ENCODE measurements at regions of chr1 and their contacts with region 1.

Region 1: GRCh38 chr1:26102526-26102925 is 9.1 kb upstream of the PDIK1L start:
- DNase-seq: no peak
- H3K4me3 Mint-ChIP-seq: no peak overlapping the region
- H3K27ac Mint-ChIP-seq: no peak overlapping the region
- H3K4me1 Mint-ChIP-seq: peaks cover 11% of the 10 kb centered on the region
- H3K27me3 Mint-ChIP-seq: peaks cover 20% of the 10 kb centered on the region

Region 2: GRCh38 chr1:26145041-26145959 is 42.8 kb after region 1 on chr1:
- intact Hi-C with region 1: loop called (anchors 1 kb)
- DNase-seq: peak; percentile 93
- H3K4me3 Mint-ChIP-seq: no peak overlapping the region
- H3K27ac Mint-ChIP-seq: no peak overlapping the region
- H3K4me1 Mint-ChIP-seq: peaks cover 2% of the 10 kb centered on the region
- H3K27me3 Mint-ChIP-seq: peaks cover 24% of the 10 kb centered on the region

Region 3: DNA sequence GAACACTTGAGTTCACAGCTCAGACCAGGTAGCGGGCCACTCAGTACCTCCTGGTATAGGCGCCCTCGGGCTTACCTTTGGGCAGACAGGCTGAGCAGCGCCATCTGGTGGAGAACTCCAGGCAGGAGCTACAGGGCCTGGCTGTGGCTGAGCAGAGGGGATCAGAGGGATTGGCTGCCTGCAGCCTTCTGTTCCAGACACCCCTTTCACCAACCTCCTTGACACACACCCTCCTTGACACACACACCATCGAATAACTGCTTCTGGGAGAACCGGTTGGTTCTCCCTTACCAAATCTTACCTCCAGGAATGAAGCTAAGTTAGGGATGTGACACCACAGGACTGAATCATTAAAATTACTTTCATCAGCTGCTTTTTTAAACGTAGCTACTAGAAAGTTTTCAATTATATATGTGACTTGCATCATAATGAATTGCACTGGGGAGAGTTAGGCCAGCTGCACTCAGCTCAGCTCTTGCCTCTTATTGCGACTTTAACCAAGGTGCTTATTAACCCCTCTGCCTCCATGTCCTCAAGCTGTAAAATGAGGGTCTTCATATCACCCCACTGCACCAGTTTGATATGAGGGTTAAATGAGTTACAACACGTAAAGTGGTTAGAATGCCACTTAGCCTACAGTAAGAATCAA is 314.7 kb after region 1 on chr1:
- intact Hi-C with region 1: loop called (anchors 2 kb)
- DNase-seq: peak; percentile 95
- H3K4me3 Mint-ChIP-seq: no peak overlapping the region
- H3K27ac Mint-ChIP-seq: no peak overlapping the region
- H3K4me1 Mint-ChIP-seq: peaks cover 4% of the 10 kb centered on the region
- H3K27me3 Mint-ChIP-seq: peaks cover 54% of the 10 kb centered on the region

Measured in activated CD4-positive, alpha-beta T cell treated with anti-CD3 and anti-CD28 coated beads, Interleukin-2, amount 10 ng/mL, durations not matched to agents 24 days and 14 days (primary cell).